AG04449 (cell line): ENCODE measurements at regions of chr11 and their contacts with region 1.

Region 1: GRCh38 chr11:12963792-12964536 is 45.2 kb upstream of the RASSF10 start:
- DNase-seq: no peak
- H3K4me3 ChIP-seq: no peak overlapping the region
- CTCF ChIP-seq: peak; percentile 84

Region 2: GRCh38 chr11:12914400-12914912 is 49.5 kb before region 1 on chr11:
- CTCF ChIA-PET with region 1: interaction called, 12 read pairs
- POLR2A ChIA-PET with region 1: no interaction called
- DNase-seq: no peak
- H3K4me3 ChIP-seq: no peak overlapping the region
- CTCF ChIP-seq: peak; percentile 86

Region 3: DNA sequence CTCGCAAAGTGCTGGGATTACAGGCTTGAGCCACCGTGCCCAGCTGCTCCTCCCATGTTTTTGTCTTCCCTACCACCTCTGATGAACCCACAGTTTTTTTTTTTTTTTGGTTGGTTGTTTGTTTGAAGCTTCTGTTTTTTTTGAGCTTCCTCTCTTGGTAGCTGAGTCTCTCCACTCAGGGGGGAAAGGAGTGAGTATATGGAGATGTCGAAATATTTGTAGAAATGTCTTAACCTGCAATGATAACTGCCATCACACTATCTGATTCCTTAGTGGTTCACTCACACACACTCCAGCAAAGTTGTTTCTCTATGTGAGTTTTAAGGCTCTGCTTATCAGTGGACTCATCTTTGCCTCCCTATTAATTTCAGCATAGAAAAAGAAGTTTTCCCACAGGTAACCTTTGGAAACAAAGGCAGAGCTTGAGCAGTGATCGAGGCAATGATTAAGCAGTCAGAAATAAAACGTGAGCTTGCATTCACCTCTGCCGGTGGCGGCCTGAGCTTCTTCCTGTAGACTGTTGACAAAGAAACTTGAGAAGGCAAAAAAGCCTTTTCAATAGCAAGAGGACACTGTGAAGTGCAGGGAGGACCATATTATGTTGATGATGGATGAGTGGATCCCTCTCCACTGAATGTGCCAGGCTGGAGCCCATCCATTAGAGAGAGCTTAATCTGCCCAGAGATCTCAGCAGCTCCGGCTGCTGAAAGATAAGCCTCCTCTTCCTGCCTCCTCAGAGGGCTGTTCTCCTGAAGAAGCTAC is 16.1 kb after region 1 on chr11:
- CTCF ChIA-PET with region 1: interaction called, 89 read pairs
- POLR2A ChIA-PET with region 1: no interaction called
- DNase-seq: no peak
- H3K4me3 ChIP-seq: no peak overlapping the region
- CTCF ChIP-seq: no peak

Region 4: GRCh38 chr11:13160346-13160745 is 196.4 kb after region 1 on chr11:
- CTCF ChIA-PET with region 1: interaction called, 357 read pairs
- POLR2A ChIA-PET with region 1: no interaction called
- DNase-seq: no peak
- H3K4me3 ChIP-seq: no peak overlapping the region
- CTCF ChIP-seq: no peak

Region 5: DNA sequence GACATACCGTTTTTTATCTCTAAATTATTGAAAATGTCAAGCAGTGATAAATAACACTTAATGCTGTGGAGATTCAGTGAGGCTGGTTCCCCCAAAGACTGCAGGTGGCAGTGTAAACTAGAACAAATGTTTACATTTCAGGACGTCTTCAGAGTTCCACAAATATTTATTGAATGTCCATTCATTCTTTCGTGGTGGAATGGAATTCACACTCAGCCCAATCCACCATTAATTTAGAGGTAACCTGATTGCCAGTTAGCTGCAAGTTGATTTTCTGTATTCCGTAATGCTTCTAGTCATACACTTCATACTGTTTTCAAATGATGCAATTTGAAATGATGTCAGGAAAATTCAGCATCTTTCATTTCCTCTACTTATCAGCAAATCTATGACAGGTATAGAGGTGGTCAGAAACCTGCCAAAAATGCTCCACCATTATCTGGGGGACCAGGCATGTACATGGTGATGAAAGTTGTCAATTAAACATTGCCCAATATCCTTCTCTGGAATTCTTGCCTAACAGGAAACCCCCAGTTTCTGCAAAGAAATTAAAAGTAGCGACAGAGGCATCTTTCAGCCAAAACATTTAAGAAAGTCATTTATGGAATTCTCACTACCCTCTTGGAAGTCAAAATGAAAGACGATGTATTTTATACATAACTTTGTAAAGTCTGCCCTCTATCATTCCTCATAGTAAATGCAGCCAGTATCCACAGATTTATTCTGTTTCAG is 219.3 kb after region 1 on chr11:
- CTCF ChIA-PET with region 1: interaction called, 118 read pairs
- POLR2A ChIA-PET with region 1: no interaction called
- DNase-seq: peak; percentile 36
- H3K4me3 ChIP-seq: peak overlapping the region; percentile 28
- CTCF ChIP-seq: peak; percentile 24

Region 6: DNA sequence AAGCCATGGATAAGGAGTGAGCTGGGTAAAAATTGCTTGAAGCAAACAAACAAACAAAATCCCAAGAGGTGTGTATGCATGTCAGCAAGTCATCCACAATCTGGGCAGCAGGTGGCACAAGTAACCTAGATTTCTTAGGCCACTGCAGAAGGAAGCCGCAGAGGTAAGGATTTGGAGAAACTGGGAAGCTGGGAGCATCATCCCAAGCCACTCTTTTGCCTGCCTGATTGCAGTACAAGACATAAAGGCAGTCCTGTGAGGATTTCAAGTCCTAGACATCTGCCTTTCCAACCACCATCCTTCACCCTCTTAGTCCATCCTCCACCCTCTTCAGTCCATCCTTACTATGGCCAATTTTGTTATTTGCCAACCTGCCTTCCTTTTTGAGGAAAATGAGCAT is 246.5 kb after region 1 on chr11:
- CTCF ChIA-PET with region 1: interaction called, 25 read pairs
- POLR2A ChIA-PET with region 1: no interaction called
- DNase-seq: peak; percentile 34
- H3K4me3 ChIP-seq: no peak overlapping the region
- CTCF ChIP-seq: peak; percentile 63

Region 7: DNA sequence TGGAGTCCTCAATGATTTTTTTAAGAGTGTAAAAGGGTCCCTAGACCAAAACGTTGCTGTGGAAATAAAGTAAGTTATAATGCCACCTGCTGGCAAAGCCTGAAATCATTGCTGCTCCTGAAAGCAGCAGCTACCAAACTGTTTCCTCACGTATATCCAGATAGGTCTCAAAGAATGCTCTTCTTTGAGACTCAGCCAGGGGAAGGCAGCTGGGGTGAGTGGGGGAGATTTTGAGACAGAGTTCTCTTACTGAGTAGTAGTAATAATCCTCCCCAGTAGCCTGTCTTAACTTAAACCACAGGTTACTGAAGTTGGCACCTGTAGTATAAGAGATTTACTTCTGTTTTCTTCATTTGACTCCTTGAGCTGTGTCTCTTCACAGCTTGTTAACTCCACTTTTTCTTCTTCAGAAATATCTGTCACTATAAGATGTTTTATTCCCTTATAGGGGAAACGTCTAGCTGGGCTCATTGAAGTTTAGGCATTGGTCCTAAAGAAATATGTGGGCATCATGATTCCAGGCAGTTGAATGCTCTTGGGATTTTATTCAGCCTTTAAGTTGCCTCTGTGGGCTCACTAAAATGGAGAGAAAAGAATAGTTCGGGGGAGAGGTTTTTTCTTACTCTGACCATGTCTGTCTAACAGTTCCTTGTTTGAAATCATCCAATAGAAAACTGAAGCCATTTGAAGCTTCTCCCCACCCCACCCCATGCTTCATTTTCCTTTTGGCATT is 421.1 kb after region 1 on chr11:
- CTCF ChIA-PET with region 1: interaction called, 20 read pairs
- POLR2A ChIA-PET with region 1: no interaction called
- DNase-seq: peak; percentile 16
- H3K4me3 ChIP-seq: no peak overlapping the region
- CTCF ChIP-seq: peak; percentile 58